ENCODE measurements at regions of chr2 and their contacts with region 1.

Region 1: DNA sequence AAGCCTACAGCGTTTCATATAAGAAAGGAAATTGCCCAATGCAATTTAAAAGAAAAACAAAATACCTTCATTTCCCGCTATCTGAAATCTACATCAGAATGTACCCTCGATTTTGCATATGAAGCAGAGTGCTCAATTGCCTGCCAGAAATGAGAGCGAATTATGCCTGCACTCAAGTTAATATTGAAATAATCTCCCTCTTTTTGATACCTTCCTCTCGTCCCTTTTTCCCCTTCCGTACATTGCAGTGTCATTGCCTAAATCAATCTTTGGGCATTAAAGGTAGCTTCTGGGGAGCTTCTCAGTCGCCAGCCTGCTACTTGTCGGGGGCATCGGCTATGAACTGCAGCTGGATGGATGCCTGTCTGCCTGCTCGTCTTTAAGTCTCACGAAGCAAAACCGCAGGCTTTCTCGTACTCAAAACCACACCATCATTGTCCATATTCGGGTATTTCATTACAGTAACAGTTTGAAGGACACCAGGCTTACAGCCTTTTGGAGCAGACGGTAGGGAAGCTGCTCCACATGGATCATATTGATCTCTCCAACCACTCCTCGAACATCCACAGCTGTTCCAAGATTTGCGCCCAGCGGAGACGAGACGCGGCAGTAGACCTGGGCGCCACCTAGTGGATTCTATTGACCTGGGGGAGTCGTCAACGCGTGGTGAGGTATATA is 64.0 kb upstream of the HNRNPA3 start:
- DNase-seq: peak; percentile 86
- ATAC-seq: peak; percentile 89
- H3K4me3 Mint-ChIP-seq: peak overlapping the region; percentile 81
- H3K27ac Mint-ChIP-seq: no peak overlapping the region
- H3K4me1 Mint-ChIP-seq: peaks cover 5% of the 10 kb centered on the region
- H3K27me3 Mint-ChIP-seq: peaks cover 31% of the 10 kb centered on the region
- CTCF ChIP-seq: peak; percentile 98

Region 2: DNA sequence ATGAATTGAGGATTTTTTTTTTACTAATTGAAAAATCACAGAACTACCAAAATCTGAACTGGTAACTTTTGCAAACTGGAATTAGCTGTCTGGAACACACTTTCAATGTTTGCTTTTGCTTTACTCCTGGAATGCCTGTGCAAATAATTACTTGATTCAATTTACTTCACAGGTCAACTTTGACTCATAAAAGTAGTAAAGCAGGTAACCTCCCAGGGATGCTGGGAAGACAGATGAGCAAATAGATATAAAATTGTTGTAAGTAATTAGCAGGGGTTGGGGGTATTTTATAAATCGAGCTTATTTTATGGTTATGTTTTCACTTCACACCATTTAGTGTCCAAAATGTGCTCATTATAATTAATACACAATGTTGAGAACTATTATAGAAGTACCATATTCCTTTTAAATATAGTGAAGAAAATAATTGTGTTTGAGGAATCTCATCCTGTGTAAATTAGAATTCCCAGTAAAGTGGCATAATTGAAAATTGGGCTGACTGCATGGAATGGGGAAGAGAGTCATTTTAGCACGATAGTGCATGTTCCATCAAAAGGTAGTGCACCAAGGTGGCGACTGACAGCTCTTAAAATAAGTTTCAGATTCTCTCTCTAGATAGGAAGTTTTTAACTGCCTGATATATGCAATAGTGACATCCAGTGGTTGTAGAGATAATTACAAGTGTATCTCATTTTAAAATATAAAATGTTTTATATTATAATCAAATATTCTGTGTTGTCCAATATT is 334.1 kb before region 1 on chr2:
- CTCF ChIA-PET with region 1: interaction called, 54 read pairs
- POLR2A ChIA-PET with region 1: no interaction called
- intact Hi-C with region 1: no loop called
- DNase-seq: peak; percentile 16
- ATAC-seq: peak; percentile 60
- H3K4me3 Mint-ChIP-seq: no peak overlapping the region
- H3K27ac Mint-ChIP-seq: no peak overlapping the region
- H3K4me1 Mint-ChIP-seq: peaks cover 34% of the 10 kb centered on the region
- H3K27me3 Mint-ChIP-seq: no peaks in the 10 kb centered on the region
- CTCF ChIP-seq: peak; percentile 81

Region 3: DNA sequence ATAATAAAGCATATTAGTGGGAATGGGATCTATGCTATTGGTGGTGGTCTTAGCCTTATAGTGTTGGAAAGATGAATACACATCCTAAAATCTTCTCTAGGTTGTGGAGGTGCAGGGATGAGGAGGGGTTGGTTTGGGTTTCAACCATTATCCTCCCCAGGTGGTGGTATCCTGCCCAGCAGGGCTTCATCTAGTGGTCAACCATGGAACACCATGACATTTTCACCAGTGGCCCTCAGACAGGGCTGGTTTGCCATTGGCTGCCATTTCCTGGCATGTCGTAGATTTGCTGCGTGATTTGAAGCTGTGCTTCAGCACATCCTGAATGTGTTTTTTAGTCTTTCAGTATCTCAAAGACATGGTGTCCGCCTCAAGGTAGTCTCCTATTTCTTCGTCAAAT is 327.3 kb before region 1 on chr2:
- CTCF ChIA-PET with region 1: interaction called, 54 read pairs
- POLR2A ChIA-PET with region 1: no interaction called
- intact Hi-C with region 1: loop called (anchors 5 kb)
- DNase-seq: no peak
- ATAC-seq: no peak
- H3K4me3 Mint-ChIP-seq: no peak overlapping the region
- H3K27ac Mint-ChIP-seq: no peak overlapping the region
- H3K4me1 Mint-ChIP-seq: peaks cover 66% of the 10 kb centered on the region
- H3K27me3 Mint-ChIP-seq: no peaks in the 10 kb centered on the region
- CTCF ChIP-seq: no peak

Region 4: GRCh38 chr2:176830362-176830761 is 318.3 kb before region 1 on chr2:
- CTCF ChIA-PET with region 1: interaction called, 15 read pairs
- POLR2A ChIA-PET with region 1: no interaction called
- intact Hi-C with region 1: no loop called
- DNase-seq: peak; percentile 53
- ATAC-seq: peak; percentile 31
- H3K4me3 Mint-ChIP-seq: no peak overlapping the region
- H3K27ac Mint-ChIP-seq: no peak overlapping the region
- H3K4me1 Mint-ChIP-seq: peaks cover 28% of the 10 kb centered on the region
- H3K27me3 Mint-ChIP-seq: peaks cover 2% of the 10 kb centered on the region
- CTCF ChIP-seq: no peak

Region 5: GRCh38 chr2:176934869-176935415 is 213.7 kb before region 1 on chr2:
- CTCF ChIA-PET with region 1: interaction called, 4 read pairs
- POLR2A ChIA-PET with region 1: no interaction called
- intact Hi-C with region 1: loop called (anchors 5 kb)
- DNase-seq: no peak
- ATAC-seq: no peak
- H3K4me3 Mint-ChIP-seq: no peak overlapping the region
- H3K27ac Mint-ChIP-seq: no peak overlapping the region
- H3K4me1 Mint-ChIP-seq: peaks cover 21% of the 10 kb centered on the region
- H3K27me3 Mint-ChIP-seq: peaks cover 2% of the 10 kb centered on the region
- CTCF ChIP-seq: no peak

Region 6: GRCh38 chr2:177044671-177045070 is 103.9 kb before region 1 on chr2:
- CTCF ChIA-PET with region 1: interaction called, 11 read pairs
- POLR2A ChIA-PET with region 1: no interaction called
- intact Hi-C with region 1: no loop called
- DNase-seq: no peak
- ATAC-seq: no peak
- H3K4me3 Mint-ChIP-seq: no peak overlapping the region
- H3K27ac Mint-ChIP-seq: no peak overlapping the region
- H3K4me1 Mint-ChIP-seq: no peaks in the 10 kb centered on the region
- H3K27me3 Mint-ChIP-seq: peaks cover 1% of the 10 kb centered on the region
- CTCF ChIP-seq: no peak

Region 7: DNA sequence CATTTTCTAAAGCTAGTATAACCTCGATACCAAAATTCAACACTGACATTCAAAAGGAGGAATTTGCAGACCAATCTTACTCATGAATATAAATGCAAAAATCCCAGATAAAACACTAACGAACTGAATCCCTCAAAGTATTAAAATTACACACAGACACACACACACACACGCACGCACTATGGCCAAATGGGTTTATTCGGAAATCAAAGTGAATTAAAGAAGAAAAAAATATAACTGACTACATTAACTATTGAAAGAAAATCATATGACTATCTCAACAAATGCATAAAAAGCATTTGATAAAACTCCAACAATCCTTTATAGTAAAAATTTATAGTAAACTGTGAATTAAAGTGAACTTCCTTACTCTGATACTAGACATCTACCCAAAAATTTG is 33.9 kb before region 1 on chr2:
- CTCF ChIA-PET with region 1: interaction called, 12 read pairs
- POLR2A ChIA-PET with region 1: no interaction called
- intact Hi-C with region 1: no loop called
- DNase-seq: no peak
- ATAC-seq: no peak
- H3K4me3 Mint-ChIP-seq: no peak overlapping the region
- H3K27ac Mint-ChIP-seq: no peak overlapping the region
- H3K4me1 Mint-ChIP-seq: no peaks in the 10 kb centered on the region
- H3K27me3 Mint-ChIP-seq: peaks cover 5% of the 10 kb centered on the region
- CTCF ChIP-seq: no peak